ENCODE measurements at regions of chr10 and their contacts with region 1.

Region 1: GRCh38 chr10:69045441-69046300 is 42.2 kb upstream of the SRGN start:
- DNase-seq: peak; percentile 93
- ATAC-seq: peak; percentile 81
- H3K4me3 ChIP-seq: peak overlapping the region; percentile 14; the same call in 1 of the 2 replicates
- H3K27ac ChIP-seq: peak overlapping the region; percentile 94
- H3K4me1 ChIP-seq: peaks cover 70% of the 10 kb centered on the region
- H3K27me3 ChIP-seq: no peaks in the 10 kb centered on the region
- CTCF ChIP-seq: no peak
- EP300 ChIP-seq: peak; percentile 78 to 84; a peak in 3 of 4 replicates
- POLR2A ChIP-seq: peak; percentile 52; the same call in 1 of the 2 replicates
- RAD21 ChIP-seq: no peak; the same call in 1 of the 2 replicates

Region 2: DNA sequence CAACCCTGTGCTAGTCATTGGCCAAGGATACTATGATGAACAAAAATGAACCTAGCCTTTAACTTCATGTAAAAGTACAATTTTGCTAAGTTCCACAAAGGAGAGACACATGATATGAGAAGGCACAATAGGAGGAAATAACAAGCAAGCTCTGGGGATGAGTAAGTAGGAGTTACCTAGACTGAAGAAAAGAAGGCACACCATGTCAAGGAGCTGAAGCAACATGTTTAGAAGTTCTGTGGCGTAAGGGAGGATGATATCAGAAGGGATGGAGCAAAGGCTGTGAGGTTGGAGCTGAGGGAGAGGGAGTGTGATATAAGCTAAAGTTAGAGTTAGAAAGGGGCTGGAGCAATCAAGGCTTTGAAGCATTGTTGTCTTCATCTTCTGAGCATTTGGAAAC is 31.5 kb before region 1 on chr10:
- CTCF ChIA-PET with region 1: interaction called, 4 read pairs
- POLR2A ChIA-PET with region 1: interaction called, 10 read pairs
- RAD21 ChIA-PET with region 1: interaction called, 19 read pairs
- SMC1A ChIA-PET with region 1: interaction called, 11 read pairs
- in situ Hi-C with region 1: no loop called
- intact Hi-C with region 1: loop called (anchors 5 kb)
- DNase-seq: no peak
- ATAC-seq: no peak
- H3K4me3 ChIP-seq: no peak overlapping the region
- H3K27ac ChIP-seq: no peak overlapping the region
- H3K4me1 ChIP-seq: no peaks in the 10 kb centered on the region
- H3K27me3 ChIP-seq: no peaks in the 10 kb centered on the region
- CTCF ChIP-seq: no peak
- EP300 ChIP-seq: no peak
- POLR2A ChIP-seq: no peak
- RAD21 ChIP-seq: no peak

Region 3: DNA sequence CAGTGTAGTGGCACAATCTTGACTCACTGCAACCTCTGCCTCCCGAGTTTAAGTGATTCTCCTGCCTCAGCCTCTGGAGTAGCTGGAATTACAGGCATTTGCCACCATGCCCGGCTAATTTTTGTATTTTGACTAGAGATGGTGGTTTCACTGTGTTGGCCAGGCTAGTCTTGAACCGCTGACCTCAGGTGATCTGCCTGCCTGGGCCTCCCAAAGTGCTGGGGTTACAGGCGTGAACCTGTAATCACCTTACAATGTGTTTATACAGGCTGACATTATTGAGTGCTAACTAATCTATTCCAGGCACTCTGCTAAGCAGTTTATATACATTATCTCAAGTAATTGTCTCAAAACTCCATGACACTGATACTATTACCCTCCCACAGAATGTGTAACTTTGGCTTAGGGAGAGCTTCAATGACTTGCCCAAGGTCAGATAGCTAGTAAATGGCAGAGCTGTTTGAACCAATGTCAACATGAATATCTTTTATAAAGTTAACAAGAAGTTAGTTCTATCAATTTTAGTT is 20.2 kb before region 1 on chr10:
- CTCF ChIA-PET with region 1: interaction called, 4 read pairs
- POLR2A ChIA-PET with region 1: interaction called, 10 read pairs
- RAD21 ChIA-PET with region 1: interaction called, 25 read pairs
- SMC1A ChIA-PET with region 1: interaction called, 60 read pairs
- in situ Hi-C with region 1: no loop called
- intact Hi-C with region 1: loop called (anchors 2 kb)
- DNase-seq: no peak
- ATAC-seq: no peak
- H3K4me3 ChIP-seq: no peak overlapping the region
- H3K27ac ChIP-seq: no peak overlapping the region
- H3K4me1 ChIP-seq: peaks cover 16% of the 10 kb centered on the region
- H3K27me3 ChIP-seq: no peaks in the 10 kb centered on the region
- CTCF ChIP-seq: no peak
- EP300 ChIP-seq: no peak
- POLR2A ChIP-seq: no peak
- RAD21 ChIP-seq: no peak

Region 4: DNA sequence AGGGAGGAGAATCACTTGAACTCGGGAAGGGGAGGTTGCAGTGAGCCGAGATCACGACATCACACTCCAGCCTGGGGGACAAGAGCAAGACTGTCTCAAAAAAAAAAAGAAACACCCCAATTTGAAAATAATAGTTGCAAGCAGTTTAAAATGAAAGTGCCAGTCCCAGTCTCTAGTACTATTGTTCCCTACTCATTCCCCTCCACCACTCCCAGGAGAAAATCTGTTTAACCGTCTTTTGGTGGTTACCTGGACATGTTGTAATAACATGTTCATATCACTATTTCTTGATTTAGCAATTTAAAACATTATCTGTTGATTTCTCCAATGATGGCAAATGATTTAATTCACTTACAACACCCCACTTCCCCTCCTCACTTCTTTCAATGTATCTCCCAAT is 12.4 kb before region 1 on chr10:
- CTCF ChIA-PET with region 1: interaction called, 4 read pairs
- POLR2A ChIA-PET with region 1: interaction called, 8 read pairs
- RAD21 ChIA-PET with region 1: interaction called, 10 read pairs
- SMC1A ChIA-PET with region 1: interaction called, 60 read pairs
- in situ Hi-C with region 1: no loop called
- intact Hi-C with region 1: no loop called
- DNase-seq: no peak
- ATAC-seq: no peak
- H3K4me3 ChIP-seq: no peak overlapping the region
- H3K27ac ChIP-seq: no peak overlapping the region
- H3K4me1 ChIP-seq: no peaks in the 10 kb centered on the region
- H3K27me3 ChIP-seq: no peaks in the 10 kb centered on the region
- CTCF ChIP-seq: no peak
- EP300 ChIP-seq: no peak
- POLR2A ChIP-seq: no peak
- RAD21 ChIP-seq: no peak

Measured in GM12878 (cell line).